HEK293 (cell line): ENCODE measurements at regions of chr19 and their contacts with region 1.

Region 1: DNA sequence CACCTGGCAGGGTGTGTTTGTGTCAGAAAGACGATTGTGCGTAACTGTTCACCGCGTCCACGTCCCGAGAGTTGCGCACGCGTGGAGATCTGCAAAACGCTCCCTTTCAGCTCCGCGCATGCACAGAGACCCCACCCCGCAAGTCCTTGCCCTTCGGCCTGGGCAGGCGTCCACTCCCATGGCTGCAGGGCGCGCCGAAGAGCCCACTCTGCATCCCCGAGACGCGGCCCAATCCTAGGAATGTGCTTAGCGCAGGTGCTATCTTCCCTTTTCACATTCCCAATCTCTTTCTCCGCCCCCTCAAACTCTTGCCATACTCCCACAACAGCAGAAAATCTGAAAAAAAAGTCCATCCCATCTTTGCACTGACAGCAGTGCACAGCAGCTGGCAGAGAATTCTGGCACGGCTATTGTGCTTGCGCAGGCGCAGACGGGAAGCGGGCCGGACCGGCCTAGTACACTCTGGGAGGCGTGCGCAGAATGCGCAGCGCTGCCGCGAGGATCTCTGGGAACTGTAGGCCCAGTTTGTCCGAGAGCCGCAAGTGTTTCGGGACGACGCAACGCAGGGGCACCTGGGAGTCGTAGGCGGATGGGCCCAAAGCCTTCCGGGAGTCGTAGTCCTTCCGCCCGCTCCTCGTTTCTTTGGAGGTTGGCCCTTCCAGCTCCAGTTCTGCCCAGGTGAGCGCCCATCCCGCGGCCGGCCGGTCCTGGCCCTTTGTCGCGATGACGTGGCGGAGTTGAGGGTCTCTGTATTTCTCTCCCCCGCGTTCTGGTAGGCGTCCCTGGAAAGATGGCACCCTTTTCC is 23.1 kb downstream of the ZNF175 start:
- H3K4me3 ChIP-seq: peak overlapping the region; percentile 62
- H3K27ac ChIP-seq: peak overlapping the region; percentile 28; the same call in 1 of the 2 replicates
- H3K4me1 ChIP-seq: no peaks in the 10 kb centered on the region
- CTCF ChIP-seq: peak; percentile 9; the same call in 1 of the 2 replicates

Region 2: DNA sequence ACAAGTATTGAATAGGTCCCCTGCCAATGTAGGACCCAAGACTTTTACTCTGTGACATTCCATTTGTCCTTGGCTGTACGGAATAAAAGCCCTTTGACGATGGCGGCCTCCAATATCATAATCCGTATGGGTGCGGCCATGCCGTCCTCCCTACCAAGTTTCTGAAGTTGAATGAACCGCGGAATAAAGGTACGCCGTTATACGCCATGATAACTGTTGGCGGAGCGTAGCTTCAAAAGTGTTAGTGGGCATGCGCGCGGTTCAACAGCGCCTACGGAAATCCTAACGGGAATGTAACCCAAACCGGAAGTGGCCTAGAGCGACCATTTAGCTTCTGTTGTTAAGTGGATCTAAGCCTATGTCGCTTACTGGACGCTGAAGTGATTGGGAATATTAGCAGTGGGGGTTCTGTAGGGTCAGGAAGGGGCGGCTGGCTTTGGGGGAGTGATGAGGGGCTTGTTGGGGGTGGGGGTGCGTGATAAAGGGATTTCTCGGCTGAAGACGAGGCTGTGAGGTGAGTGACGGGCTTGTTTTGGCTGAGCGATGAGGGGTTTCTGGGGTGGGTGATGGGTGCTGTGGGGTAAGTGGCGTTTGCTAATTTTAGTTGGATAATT is 23.1 kb before region 1 on chr19 and contains the start of gene ZNF175:
- CTCF ChIA-PET with region 1: no interaction called
- POLR2A ChIA-PET with region 1: interaction called, 42 read pairs
- H3K4me3 ChIP-seq: peak within 1 kb of the TSS; percentile 92
- H3K27ac ChIP-seq: no peak within 1 kb of the TSS
- H3K4me1 ChIP-seq: no peaks in the 10 kb centered on the region
- CTCF ChIP-seq: no peak

Region 3: DNA sequence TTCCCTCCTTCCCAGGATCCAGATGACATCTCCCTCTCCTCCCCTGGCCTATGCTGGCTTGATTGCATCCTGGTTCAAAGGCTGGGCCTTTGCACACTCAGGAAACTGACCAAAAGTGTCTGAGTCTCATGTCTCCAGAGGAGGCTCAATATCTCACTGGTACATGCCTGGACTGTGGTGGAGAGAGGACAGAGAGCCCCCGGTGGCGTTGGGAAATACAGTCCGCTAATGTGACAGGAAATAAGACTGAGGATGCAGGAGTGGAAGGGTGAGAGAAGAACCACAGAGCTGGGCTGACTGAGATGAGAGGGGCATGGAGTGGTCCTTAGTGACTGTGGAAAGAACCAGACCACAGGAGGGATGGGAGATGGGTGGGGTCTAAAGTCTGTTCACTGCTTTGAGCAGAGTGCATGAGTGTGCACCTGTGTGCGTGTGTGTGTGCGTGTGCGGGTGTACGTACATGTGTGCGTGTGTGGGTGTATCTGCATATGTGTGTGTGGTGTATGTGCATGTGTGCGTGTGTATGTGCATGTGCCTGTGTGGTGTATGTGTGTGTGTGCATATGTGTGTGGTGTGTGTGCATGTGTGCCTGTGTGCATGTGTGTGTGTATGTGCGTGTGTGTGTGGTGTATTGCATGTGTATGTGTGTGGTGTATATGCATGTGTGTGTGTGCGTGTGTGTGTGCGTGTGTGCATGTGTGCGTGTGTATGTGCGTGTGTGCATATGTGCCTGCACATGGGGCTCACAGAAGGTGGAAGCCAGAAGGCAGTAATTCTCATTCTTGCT is 34.2 kb after region 1 on chr19:
- CTCF ChIA-PET with region 1: no interaction called
- POLR2A ChIA-PET with region 1: no interaction called
- H3K4me3 ChIP-seq: no peak overlapping the region
- H3K27ac ChIP-seq: no peak overlapping the region
- H3K4me1 ChIP-seq: no peaks in the 10 kb centered on the region
- CTCF ChIP-seq: no peak